Ascending aorta (tissue), 2 donors: ENCODE measurements at regions of chr13 and their contacts with region 1.

Region 1: DNA sequence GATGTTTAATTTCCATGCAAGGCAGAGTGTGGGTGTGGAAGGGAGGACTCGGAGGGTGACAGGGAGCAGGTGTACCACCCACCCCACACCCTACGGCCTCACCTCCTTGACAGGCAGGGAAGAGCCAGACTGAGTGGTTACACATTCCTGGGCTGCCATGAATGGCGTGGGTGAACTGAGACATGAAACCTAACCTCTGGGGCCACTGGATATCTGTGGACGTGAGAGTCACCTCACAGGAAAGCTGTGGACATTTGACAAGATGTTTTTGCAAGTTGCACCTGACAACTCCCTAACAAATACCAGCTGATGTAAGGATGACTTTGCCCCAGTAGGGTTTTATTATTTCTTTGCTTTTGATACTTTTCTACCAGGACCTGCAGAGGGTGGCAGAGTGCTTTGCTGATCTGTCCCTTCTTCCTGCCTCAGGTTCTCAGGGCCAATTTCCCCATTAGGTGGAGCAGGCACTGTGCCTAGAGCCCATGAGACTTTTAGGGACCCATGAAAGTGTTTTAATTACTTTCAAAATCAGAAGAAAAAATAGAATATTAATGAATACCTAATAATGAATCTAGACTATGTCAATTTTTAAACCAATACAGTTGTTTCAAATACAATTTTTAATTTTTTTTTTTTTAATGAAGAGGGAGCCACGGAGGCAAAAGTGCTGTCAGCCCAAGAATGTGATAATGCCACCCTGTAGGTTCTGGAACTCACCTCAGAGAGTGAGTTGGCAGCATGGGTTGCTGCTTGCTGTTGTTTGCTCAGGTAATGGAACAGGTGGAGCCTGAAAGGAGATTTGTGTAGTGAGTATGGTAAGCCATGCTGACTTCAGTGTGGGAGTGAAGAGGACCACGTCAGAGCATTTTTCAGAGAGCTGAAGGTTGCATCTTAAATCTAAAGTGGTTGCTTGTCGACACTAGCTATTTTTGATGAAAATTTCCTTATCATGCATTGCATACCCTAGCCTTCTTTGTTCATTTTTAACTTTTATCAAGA is 58.0 kb upstream of the CYSLTR2 start:
- DNase-seq: no peak
- H3K4me3 ChIP-seq: no peak overlapping the region
- H3K27ac ChIP-seq: no peak overlapping the region
- H3K4me1 ChIP-seq: no peaks in the 10 kb centered on the region
- H3K27me3 ChIP-seq: no peaks in the 10 kb centered on the region
- CTCF ChIP-seq: peak; percentile 31 to 64 (median 47)

Region 2: GRCh38 chr13:48457578-48458242 is 138.0 kb before region 1 on chr13:
- intact Hi-C with region 1: no loop called
- DNase-seq: no peak
- H3K4me3 ChIP-seq: no peak overlapping the region
- H3K27ac ChIP-seq: no peak overlapping the region
- H3K4me1 ChIP-seq: no peaks in the 10 kb centered on the region
- H3K27me3 ChIP-seq: no peaks in the 10 kb centered on the region
- CTCF ChIP-seq: no peak

Region 3: DNA sequence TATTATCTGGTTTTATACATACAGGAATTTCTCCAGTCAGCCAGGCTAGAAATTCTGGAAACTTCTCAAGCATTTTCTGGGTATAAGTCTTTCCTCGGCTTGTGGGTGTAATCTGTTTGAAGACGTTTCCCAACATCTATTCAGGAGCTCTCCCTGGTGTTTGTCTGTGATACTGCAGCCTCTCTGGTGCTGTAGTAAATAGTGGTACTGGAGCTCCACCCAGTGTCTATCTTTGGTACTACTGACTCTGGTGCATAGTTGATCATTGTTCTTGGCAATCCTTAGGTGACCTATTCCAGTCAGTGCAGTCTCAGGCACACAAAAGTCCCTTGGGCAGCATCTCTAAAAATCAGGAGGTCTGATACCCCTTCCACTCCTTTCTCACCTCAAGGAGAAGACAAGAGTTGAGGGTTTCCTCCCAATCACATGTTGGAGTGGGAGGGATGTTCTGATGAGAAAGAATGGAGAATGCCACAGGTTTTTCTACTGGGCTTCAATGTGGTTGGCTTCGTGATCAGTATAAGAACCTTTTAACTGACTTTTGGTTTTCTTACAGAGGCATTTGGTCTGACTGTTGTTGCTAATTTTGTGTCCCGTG is 173.5 kb after region 1 on chr13:
- intact Hi-C with region 1: loop called (anchors 5 kb)
- DNase-seq: peak in 1 of 2 donors; percentile 92
- H3K4me3 ChIP-seq: no peak overlapping the region
- H3K27ac ChIP-seq: no peak overlapping the region
- H3K4me1 ChIP-seq: no peaks in the 10 kb centered on the region
- H3K27me3 ChIP-seq: no peaks in the 10 kb centered on the region
- CTCF ChIP-seq: peak; percentile 91 to 99 (median 92)

Region 4: DNA sequence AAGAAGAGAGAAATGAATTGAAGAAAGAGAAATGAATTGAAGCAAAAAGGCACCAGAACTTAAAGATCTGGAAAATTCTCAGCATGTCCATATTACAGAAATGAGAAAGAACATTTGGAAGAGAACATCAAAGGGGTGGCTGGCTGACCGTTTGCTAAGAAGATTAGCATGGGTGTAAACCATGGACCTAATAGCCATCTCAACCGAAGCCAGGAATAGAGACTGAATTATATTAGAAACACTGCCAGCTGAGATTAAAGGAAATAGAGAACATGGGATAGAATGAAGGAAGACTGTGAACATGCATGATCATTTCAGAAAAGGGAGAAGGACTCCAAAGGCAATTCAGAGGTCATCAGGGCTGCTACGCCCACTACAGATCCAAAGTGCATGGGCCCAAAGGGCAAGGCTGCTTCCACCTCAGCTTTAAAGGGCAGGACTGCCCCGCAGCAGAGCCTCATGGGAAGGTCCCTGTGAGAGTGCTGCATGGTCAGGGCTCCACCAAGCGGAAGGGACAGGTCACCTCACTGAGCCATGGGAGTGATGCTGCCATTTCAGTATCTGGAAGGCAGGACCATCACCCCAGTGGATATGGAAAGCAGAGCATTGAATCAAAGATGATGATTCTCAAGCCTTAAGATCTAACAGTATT is 403.0 kb after region 1 on chr13:
- intact Hi-C with region 1: no loop called
- DNase-seq: no peak
- H3K4me3 ChIP-seq: no peak overlapping the region
- H3K27ac ChIP-seq: no peak overlapping the region
- H3K4me1 ChIP-seq: peaks cover 0 to 9% of the 10 kb centered on the region in 2 donors
- H3K27me3 ChIP-seq: no peaks in the 10 kb centered on the region
- CTCF ChIP-seq: no peak

Region 5: DNA sequence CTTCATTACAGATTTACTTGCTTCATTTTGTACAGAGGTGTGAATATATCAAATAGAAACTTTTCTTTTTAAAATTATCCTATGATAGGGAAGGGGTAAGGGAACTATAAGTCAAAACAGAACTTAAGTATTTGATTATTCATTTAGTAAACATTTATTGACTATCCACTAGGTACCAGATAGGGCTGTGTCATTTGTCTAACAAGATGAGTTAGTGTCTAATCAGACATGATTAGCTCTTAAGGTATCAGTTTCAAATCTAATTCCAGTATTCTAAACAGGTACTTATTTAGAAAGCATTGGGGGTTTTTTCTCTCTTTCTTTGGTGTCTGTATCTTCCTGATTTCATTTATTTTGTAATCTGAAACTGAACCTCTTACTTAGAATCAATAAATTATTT is 684.2 kb after region 1 on chr13:
- intact Hi-C with region 1: loop called (anchors 5 kb)
- DNase-seq: no peak
- H3K4me3 ChIP-seq: no peak overlapping the region
- H3K27ac ChIP-seq: no peak overlapping the region
- H3K4me1 ChIP-seq: no peaks in the 10 kb centered on the region
- H3K27me3 ChIP-seq: no peaks in the 10 kb centered on the region
- CTCF ChIP-seq: no peak